Cardiac septum (tissue), 1 donor: ENCODE measurements at regions of chr22 and their contacts with region 1.

Region 1: GRCh38 chr22:17638432-17639246 is at the start of gene BCL2L13:
- DNase-seq: peak; percentile 97
- total RNA-seq, gene BCL2L13: 69.9 TPM

Region 2: DNA sequence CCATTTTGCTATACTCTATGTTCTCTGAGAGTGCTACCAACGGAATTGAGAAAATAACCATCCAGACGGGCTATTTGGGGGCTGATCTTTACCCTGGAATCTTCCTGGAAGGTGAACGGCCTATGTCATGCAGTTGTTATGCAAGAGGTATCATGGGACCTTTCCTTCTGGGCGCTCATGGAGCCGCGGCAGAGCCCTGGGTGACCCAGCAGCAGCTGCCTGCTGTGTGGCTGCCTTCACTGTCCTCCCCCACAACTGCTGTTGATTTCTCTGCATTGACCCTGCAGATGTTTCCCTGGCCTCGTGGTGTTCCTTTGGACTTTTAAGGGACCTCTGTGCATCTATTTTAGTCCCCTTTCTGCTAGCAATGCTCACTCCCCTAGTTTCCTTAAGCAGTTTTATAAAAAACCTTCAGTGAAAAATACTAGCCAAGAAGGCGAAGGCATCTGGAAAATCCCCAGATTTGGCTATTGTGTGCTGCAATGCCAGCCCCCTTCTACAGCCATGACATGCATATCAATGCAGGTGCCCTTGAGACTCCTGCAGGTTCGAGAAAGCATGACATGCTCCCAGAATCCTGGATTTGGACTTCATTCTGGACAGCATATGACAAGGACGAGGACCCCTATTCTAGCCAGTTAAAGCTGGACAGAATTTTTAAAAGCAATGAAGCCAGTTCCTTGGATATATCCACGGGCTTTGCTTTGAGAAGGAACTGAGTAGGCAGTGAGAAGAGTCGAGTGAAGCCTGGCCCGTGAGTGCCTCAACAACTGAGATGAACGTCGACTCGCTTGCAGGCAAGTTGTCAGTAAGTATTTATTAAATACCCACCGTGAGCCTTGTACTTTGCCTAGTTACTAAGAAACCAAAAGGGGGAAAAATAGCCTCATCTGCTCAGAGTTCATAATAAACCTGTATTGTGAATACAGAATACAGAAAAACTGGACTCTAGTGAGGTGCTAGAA is 75.5 kb before region 1 on chr22 and contains the start of gene SLC25A18:
- intact Hi-C with region 1: loop called (anchors 2 kb)
- DNase-seq: no peak
- total RNA-seq, gene SLC25A18: 0.11 TPM

Region 3: DNA sequence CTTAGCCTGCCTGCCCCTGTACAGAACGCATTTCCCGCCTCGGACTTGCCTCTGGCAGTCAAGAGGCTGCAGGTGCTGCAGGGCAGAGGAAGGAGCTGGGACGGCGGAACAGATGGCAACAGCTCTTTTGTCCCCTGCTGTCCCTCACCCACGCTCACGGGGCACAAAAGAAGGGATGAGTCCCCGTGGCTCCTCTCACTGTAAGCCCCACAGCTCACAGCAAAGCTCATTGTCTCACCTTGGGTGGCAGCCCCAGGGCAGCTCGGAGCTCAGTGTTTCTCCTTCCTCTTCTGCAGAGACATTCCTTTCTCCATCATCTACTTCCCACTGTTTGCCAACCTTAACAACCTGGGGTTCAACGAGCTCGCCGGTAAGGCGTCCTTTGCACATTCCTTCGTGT is 51.0 kb before region 1 on chr22:
- intact Hi-C with region 1: no loop called
- DNase-seq: no peak

Region 4: GRCh38 chr22:17628304-17629166 is 10.1 kb before region 1 on chr22 and contains the start of gene ATP6V1E1:
- intact Hi-C with region 1: loop called (anchors 1 kb)
- DNase-seq: peak; percentile 99
- total RNA-seq, gene ATP6V1E1: 174 TPM